ENCODE measurements at regions of chr3 and their contacts with region 1.

Region 1: DNA sequence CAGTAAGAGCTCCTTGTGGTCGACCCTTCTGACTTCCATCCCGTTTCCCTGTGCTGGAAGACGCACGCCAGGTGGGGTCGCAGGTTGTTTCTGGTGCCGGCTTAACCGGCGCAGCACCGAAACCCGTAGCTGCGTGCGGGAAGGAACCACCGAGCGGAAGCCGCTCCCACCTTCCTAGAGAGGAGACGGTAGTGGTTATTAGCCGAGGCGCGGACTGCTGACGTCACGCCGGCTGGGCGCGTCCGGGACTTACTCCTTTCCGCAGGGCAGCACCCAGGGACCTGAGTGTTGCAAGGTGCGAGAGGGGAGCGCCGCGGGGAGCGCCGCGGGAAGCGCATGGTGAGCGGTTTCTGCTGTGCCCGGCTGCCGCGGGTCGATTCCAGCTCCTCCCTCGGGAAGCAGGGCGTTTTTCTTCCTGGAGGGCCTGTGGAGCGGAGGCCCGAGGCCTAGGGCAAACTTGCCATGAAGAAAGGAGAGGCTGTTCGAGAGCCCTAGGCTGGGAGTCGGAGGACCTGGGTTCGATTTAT is at the start of gene ZNF501:
- DNase-seq: peak; percentile 80 to 91
- H3K4me3 ChIP-seq: peak within 1 kb of the TSS; percentile 81
- H3K27ac ChIP-seq: peak within 1 kb of the TSS; percentile 41
- H3K4me1 ChIP-seq: 0 out of 2 replicates have a peak, but pooled peaks cover 5% of the 10 kb centered on the region
- H3K27me3 ChIP-seq: no peaks in the 10 kb centered on the region
- CTCF ChIP-seq: no peak
- total RNA-seq, gene ZNF501: 2.6 and 3.9 TPM in 2 replicates

Region 2: GRCh38 chr3:44323341-44323955 is 406.0 kb before region 1 on chr3:
- CTCF ChIA-PET with region 1: no interaction called
- POLR2A ChIA-PET with region 1: no interaction called
- intact Hi-C with region 1: loop called (anchors 5 kb)
- DNase-seq: peak in 1 of 2 experiments; percentile 57
- H3K4me3 ChIP-seq: no peak overlapping the region
- H3K27ac ChIP-seq: no peak overlapping the region
- H3K4me1 ChIP-seq: peaks cover 10% of the 10 kb centered on the region; the same call in 1 of the 2 replicates
- H3K27me3 ChIP-seq: no peaks in the 10 kb centered on the region
- CTCF ChIP-seq: peak; percentile 79

Region 3: DNA sequence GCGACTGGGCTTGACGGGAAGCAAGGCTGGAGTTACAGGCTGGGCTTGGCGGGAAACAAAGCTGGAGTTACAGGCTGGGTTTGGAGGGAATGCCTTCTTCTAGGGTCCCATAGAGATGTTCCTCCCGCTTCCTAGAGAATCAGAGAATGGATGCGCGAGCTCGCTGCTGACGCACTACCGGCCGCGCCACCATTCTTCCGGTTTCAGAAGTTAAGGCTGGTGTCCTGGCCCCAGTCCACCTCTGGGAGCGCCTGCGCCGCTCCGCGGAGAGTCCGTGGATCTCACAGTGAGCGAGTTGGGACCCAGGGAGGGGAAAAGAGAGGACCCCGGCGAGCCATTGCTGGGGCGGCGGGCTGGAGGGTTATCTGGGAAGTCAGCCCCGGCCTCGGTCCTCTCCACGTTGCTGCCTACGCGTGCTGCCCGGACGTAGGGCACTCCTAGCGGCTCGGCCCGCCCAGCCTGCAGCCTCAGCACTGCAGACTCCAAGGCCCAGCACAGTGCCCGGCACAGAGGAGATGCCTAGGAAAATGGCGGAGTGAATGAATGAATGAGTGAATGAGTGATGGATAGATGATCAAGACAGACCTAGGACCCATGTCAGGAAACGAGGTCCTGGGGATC is 16.9 kb before region 1 on chr3 and contains the start of gene ZNF502:
- CTCF ChIA-PET with region 1: no interaction called
- POLR2A ChIA-PET with region 1: interaction called, 14 read pairs
- intact Hi-C with region 1: loop called (anchors 1 kb)
- DNase-seq: peak; percentile 69 to 71
- H3K4me3 ChIP-seq: peak within 1 kb of the TSS; percentile 94
- H3K27ac ChIP-seq: no peak within 1 kb of the TSS
- H3K4me1 ChIP-seq: no peaks in the 10 kb centered on the region
- H3K27me3 ChIP-seq: peaks cover 35% of the 10 kb centered on the region
- CTCF ChIP-seq: 0 out of 2 replicates have a peak, but pooled peaks have one; percentile 29
- total RNA-seq, gene ZNF502: 2.1 and 2.8 TPM in 2 replicates

Region 4: GRCh38 chr3:44761424-44762169 is 32.1 kb after region 1 on chr3 and contains the starts of genes KIAA1143 and KIF15:
- CTCF ChIA-PET with region 1: no interaction called
- POLR2A ChIA-PET with region 1: interaction called, 4 read pairs
- intact Hi-C with region 1: loop called (anchors 1 kb)
- DNase-seq: peak; percentile 87 to 92
- H3K4me3 ChIP-seq: peak within 1 kb of the TSS; percentile 63
- H3K27ac ChIP-seq: peak within 1 kb of the TSS; percentile 47
- H3K4me1 ChIP-seq: peaks cover 5% of the 10 kb centered on the region; the same call in 1 of the 2 replicates
- H3K27me3 ChIP-seq: no peaks in the 10 kb centered on the region
- CTCF ChIP-seq: no peak
- total RNA-seq, gene KIAA1143: 17.8 and 34.4 TPM in 2 replicates
- total RNA-seq, gene KIF15: 16.5 and 25.8 TPM in 2 replicates

Region 5: GRCh38 chr3:45269952-45270351 is 540.5 kb after region 1 on chr3:
- CTCF ChIA-PET with region 1: no interaction called
- POLR2A ChIA-PET with region 1: no interaction called
- intact Hi-C with region 1: no loop called
- DNase-seq: no peak
- H3K4me3 ChIP-seq: no peak overlapping the region
- H3K27ac ChIP-seq: no peak overlapping the region
- H3K4me1 ChIP-seq: peaks cover 29% of the 10 kb centered on the region
- H3K27me3 ChIP-seq: no peaks in the 10 kb centered on the region
- CTCF ChIP-seq: no peak

Region 6: GRCh38 chr3:46524008-46524407 is 1794.6 kb after region 1 on chr3:
- CTCF ChIA-PET with region 1: no interaction called
- POLR2A ChIA-PET with region 1: interaction called, 13 read pairs
- intact Hi-C with region 1: no loop called
- DNase-seq: no peak
- H3K4me3 ChIP-seq: no peak overlapping the region
- H3K27ac ChIP-seq: no peak overlapping the region
- H3K4me1 ChIP-seq: no peaks in the 10 kb centered on the region
- H3K27me3 ChIP-seq: no peaks in the 10 kb centered on the region
- CTCF ChIP-seq: no peak